Heart right ventricle (tissue), 16 donors: ENCODE measurements at regions of chrX and their contacts with region 1.

Region 1: DNA sequence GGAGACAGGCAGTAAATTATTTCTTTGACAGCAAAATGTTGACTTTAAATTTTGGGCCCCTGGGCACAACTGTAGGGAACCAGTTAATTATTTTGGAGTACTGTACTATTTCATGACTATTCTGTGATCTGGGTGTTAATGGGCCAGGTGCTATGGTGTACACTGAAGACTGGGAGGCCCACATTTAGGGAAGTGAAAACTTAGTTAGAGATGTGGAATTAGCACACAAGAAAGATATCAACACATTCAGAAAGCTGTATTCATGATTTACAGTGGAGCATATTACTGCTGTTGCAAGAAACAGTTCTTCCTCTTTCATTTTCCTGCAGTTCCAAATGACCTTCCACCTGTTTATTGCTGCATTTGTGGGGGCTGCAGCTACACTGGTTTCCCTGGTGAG is 12.4 kb downstream of the PLP1 start:
- DNase-seq: no peak
- ATAC-seq: no peak
- H3K4me3 ChIP-seq: no peak overlapping the region
- H3K27ac ChIP-seq: no peak overlapping the region
- H3K4me1 ChIP-seq: no peaks in the 10 kb centered on the region
- H3K27me3 ChIP-seq: peaks cover 0 to 56% (median 0%) of the 10 kb centered on the region in 7 donors
- CTCF ChIP-seq: no peak

Region 2: DNA sequence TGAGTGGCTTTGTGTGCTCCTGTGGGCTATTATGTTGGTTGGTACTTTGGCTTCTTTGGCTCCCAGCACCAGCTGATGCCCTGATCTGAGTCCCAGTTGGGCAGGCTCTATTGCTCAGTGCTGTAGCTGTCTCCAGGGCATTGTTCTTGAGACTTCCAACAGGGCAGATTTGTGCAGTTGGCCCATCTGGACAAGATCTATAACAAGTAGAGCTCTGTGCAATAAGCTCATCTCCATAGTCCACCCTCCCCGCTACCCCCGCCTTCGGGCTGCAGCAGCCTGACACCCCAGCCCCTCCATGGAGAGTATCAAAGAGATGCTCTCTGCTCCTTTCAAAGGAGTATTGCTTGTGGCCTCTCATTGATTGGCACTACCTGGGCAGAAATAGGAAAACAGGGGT is 84.1 kb before region 1 on chrX:
- intact Hi-C with region 1: loop called in 1 of 10 experiments (anchors 10 kb)
- DNase-seq: no peak
- ATAC-seq: no peak
- H3K4me3 ChIP-seq: no peak overlapping the region
- H3K27ac ChIP-seq: no peak overlapping the region
- H3K4me1 ChIP-seq: no peaks in the 10 kb centered on the region
- H3K27me3 ChIP-seq: peaks cover 0 to 8% (median 0%) of the 10 kb centered on the region in 7 donors
- CTCF ChIP-seq: no peak

Region 3: GRCh38 chrX:103734125-103734770 is 54.8 kb before region 1 on chrX:
- intact Hi-C with region 1: no loop called
- DNase-seq: no peak
- ATAC-seq: no peak
- H3K4me3 ChIP-seq: no peak overlapping the region
- H3K27ac ChIP-seq: no peak overlapping the region
- H3K4me1 ChIP-seq: peaks cover 0 to 20% (median 10%) of the 10 kb centered on the region in 9 donors
- H3K27me3 ChIP-seq: peaks cover 0 to 60% (median 0%) of the 10 kb centered on the region in 7 donors
- CTCF ChIP-seq: no peak